Mammary epithelial cell (primary cell): ENCODE measurements at regions of chr4 and their contacts with region 1.

Region 1: GRCh38 chr4:22473268-22473667 is 42.6 kb downstream of the ADGRA3 start:
- DNase-seq: peak; percentile 80
- H3K4me3 ChIP-seq: no peak overlapping the region
- H3K27ac ChIP-seq: peak overlapping the region; percentile 65
- H3K4me1 ChIP-seq: peaks cover 44% of the 10 kb centered on the region
- H3K27me3 ChIP-seq: no peaks in the 10 kb centered on the region
- CTCF ChIP-seq: no peak

Region 2: GRCh38 chr4:22458098-22458497 is 15.2 kb before region 1 on chr4:
- CTCF ChIA-PET with region 1: no interaction called
- dilution Hi-C with region 1: no loop called
- in situ Hi-C with region 1: no loop called
- intact Hi-C with region 1: no loop called
- DNase-seq: peak; percentile 34
- H3K4me3 ChIP-seq: no peak overlapping the region
- H3K27ac ChIP-seq: no peak overlapping the region
- H3K4me1 ChIP-seq: no peaks in the 10 kb centered on the region
- H3K27me3 ChIP-seq: no peaks in the 10 kb centered on the region
- CTCF ChIP-seq: no peak

Region 3: DNA sequence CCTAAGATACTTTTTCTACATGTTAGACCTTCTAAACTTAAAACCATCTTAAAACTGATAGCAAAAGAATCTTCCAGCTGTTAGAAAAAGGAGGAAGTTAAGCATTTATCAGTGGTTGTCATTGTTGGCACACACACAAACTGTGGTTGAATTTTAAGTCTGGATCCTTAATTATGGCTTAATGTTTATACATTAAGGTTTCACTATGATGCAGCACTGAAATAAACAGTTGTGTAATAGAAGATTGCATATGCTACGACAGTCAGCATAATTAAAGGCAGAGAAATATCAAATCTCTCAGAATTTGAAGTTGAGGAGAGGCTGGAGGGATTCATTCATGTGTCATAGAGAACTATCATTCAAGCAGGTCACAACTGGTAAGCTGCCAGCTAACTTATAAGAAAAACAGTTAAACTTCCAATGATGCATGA is 10.3 kb after region 1 on chr4:
- CTCF ChIA-PET with region 1: no interaction called
- dilution Hi-C with region 1: no loop called
- in situ Hi-C with region 1: no loop called
- intact Hi-C with region 1: loop called (anchors 1 kb)
- DNase-seq: peak; percentile 82
- H3K4me3 ChIP-seq: no peak overlapping the region
- H3K27ac ChIP-seq: peak overlapping the region; percentile 89
- H3K4me1 ChIP-seq: peaks cover 56% of the 10 kb centered on the region
- H3K27me3 ChIP-seq: no peaks in the 10 kb centered on the region
- CTCF ChIP-seq: no peak

Region 4: GRCh38 chr4:22500831-22501719 is 27.8 kb after region 1 on chr4:
- CTCF ChIA-PET with region 1: no interaction called
- dilution Hi-C with region 1: no loop called
- in situ Hi-C with region 1: no loop called
- intact Hi-C with region 1: loop called (anchors 2 kb)
- DNase-seq: peak; percentile 95
- H3K4me3 ChIP-seq: no peak overlapping the region
- H3K27ac ChIP-seq: no peak overlapping the region
- H3K4me1 ChIP-seq: peaks cover 55% of the 10 kb centered on the region
- H3K27me3 ChIP-seq: no peaks in the 10 kb centered on the region
- CTCF ChIP-seq: no peak

Region 5: GRCh38 chr4:23114538-23114937 is 641.3 kb after region 1 on chr4:
- CTCF ChIA-PET with region 1: no interaction called
- dilution Hi-C with region 1: no loop called
- in situ Hi-C with region 1: no loop called
- intact Hi-C with region 1: no loop called
- DNase-seq: no peak
- H3K4me3 ChIP-seq: no peak overlapping the region
- H3K27ac ChIP-seq: no peak overlapping the region
- H3K4me1 ChIP-seq: no peaks in the 10 kb centered on the region
- H3K27me3 ChIP-seq: no peaks in the 10 kb centered on the region
- CTCF ChIP-seq: no peak